ENCODE measurements at regions of chr4 and their contacts with region 1.

Region 1: GRCh38 chr4:47104986-47105385 is 73.6 kb downstream of the GABRB1 start:
- DNase-seq: no peak
- H3K4me3 ChIP-seq: no peak overlapping the region
- H3K27ac ChIP-seq: no peak overlapping the region
- H3K4me1 ChIP-seq: no peaks in the 10 kb centered on the region
- H3K27me3 ChIP-seq: no peaks in the 10 kb centered on the region
- CTCF ChIP-seq: no peak
- EP300 ChIP-seq: no peak
- POLR2A ChIP-seq: no peak

Region 2: GRCh38 chr4:46081674-46082073 is 1023.3 kb before region 1 on chr4:
- in situ Hi-C with region 1: no loop called
- intact Hi-C with region 1: no loop called
- DNase-seq: no peak
- H3K4me3 ChIP-seq: no peak overlapping the region
- H3K27ac ChIP-seq: no peak overlapping the region
- H3K4me1 ChIP-seq: no peaks in the 10 kb centered on the region
- H3K27me3 ChIP-seq: no peaks in the 10 kb centered on the region
- CTCF ChIP-seq: no peak
- EP300 ChIP-seq: no peak
- POLR2A ChIP-seq: no peak

Region 3: GRCh38 chr4:46867263-46867662 is 237.7 kb before region 1 on chr4:
- in situ Hi-C with region 1: no loop called
- intact Hi-C with region 1: loop called (anchors 5 kb)
- DNase-seq: no peak
- H3K4me3 ChIP-seq: no peak overlapping the region
- H3K27ac ChIP-seq: no peak overlapping the region
- H3K4me1 ChIP-seq: no peaks in the 10 kb centered on the region
- H3K27me3 ChIP-seq: no peaks in the 10 kb centered on the region
- CTCF ChIP-seq: no peak
- EP300 ChIP-seq: no peak
- POLR2A ChIP-seq: no peak

Region 4: DNA sequence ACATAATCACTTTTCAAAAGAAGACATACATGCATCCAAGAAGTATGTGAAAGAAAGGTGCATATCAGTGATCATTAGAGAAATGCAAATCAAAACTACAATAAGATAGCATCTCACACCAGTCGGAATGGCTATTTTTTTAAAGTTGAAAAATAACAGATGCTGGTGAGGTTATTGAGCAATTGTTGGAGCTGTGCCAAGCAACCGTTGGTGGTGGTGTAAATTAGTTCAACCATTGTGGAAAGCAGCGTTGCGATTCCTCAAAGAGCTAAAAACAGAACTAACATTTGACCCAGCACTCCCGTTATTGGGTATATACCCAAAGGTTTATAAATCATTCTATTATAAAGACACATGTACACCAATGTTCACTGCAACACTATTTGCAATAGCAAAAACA is 210.2 kb before region 1 on chr4:
- in situ Hi-C with region 1: no loop called
- intact Hi-C with region 1: no loop called
- DNase-seq: no peak
- H3K4me3 ChIP-seq: no peak overlapping the region
- H3K27ac ChIP-seq: no peak overlapping the region
- H3K4me1 ChIP-seq: no peaks in the 10 kb centered on the region
- H3K27me3 ChIP-seq: no peaks in the 10 kb centered on the region
- CTCF ChIP-seq: no peak
- EP300 ChIP-seq: no peak
- POLR2A ChIP-seq: no peak

Region 5: DNA sequence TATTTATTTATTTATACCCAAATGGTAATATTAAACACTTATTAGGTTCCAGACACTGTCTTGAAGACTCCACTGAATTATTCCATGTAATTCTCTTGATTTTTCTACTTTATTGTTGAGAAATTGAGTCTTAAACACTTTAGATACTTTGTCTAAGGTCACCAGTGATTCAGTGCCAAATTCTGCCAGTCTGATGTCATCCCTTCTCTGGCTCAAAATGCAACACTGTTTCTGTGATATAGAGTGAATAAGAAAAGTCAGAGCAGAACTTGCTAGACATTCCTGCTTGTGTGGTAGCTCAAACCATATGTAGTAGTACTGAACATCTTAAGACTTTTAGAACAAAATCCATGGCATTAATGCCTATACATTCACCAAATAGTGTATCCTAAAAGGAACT is 90.7 kb after region 1 on chr4:
- in situ Hi-C with region 1: no loop called
- intact Hi-C with region 1: no loop called
- DNase-seq: no peak
- H3K4me3 ChIP-seq: no peak overlapping the region
- H3K27ac ChIP-seq: no peak overlapping the region
- H3K4me1 ChIP-seq: peaks cover 0 to 10% (median 0%) of the 10 kb centered on the region in 4 donors
- H3K27me3 ChIP-seq: no peaks in the 10 kb centered on the region
- CTCF ChIP-seq: no peak
- EP300 ChIP-seq: no peak
- POLR2A ChIP-seq: no peak

Region 6: DNA sequence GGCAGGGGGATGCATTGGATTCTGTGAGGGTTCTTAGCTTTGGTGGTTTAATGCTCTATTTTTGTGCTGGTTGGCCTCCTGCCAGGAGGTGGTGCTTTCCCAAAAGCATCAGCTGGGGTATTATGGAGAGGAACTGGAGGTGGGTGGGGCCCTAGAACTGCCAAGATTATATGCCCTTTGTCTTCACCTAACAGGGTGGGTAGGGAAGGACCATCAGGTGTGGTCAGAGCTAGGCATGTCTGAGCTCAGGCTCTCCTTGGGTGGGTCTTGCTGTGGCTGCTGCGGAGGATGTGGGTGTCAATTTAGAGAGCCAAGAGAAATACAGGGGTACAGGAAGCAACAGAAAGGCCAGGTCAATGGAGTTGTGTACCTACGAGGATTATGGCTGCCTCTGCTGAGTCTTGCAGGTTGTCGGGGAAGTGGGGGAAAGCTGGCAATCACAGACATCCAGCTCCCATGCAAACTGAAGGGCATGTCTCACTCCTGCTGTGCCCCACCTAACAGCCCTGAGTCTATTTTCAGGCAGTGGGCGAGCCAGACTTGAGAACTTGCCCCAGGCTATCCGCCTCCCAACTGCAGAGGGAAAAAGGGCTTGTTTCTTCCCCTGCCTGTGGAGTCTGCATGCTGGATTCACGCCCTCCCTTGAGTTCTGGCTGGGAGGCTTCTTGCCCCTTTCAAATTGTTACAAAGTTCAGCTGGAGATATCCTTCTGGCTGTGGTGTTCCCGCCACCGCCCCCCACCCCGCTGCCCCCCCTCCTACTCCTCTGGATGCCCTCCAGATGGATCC is 146.6 kb after region 1 on chr4:
- in situ Hi-C with region 1: no loop called
- intact Hi-C with region 1: no loop called
- DNase-seq: no peak
- H3K4me3 ChIP-seq: no peak overlapping the region
- H3K27ac ChIP-seq: no peak overlapping the region
- H3K4me1 ChIP-seq: no peaks in the 10 kb centered on the region
- H3K27me3 ChIP-seq: no peaks in the 10 kb centered on the region
- CTCF ChIP-seq: no peak
- EP300 ChIP-seq: no peak
- POLR2A ChIP-seq: no peak

Measured in transverse colon (tissue), 4 donors.